ENCODE measurements at regions of chr2 and their contacts with region 1.

Region 1: DNA sequence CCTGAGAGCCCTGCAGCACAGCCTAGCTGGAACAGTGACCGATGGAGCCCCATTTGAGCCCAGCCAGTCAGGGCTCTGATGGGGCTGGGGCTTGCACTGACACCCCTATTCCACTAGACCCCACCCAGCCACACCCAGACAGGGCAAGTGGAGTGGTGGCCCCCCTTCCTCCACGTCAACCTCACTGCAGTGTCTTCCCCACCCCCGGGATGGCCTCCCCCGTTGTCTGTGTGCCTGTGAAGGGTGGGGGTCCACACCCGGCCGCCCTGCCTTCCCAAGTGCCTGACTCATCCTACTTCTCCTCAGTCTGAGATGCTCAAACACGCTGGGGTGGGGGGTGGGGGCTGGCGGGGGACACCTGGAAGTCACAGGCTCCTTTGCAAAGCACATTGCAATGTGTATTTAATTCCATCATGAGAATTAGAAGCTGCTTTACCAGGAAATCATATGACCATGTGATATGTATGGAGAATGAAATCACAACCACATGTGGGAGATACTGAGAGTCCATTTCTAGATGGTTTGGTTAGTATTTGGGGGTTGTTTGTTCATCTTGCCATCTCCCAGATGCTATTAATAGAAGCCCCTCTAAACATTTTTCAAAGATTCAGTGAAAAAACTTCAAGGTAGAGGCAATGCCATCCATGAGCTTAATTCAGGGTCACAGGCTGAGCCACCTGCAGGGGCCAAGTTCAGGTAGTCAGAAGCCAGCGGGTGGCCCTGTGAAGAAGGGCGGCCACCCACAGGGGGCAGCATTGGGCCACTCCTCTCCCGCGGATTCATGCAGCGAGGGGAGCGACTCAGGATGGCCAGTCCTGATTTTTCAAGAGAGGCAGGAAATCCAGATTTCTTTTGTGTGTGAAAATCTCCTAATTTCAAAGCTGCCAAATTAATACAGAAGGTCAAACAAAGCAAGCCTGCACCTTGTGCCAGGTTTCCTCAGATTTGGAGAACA is 22.7 kb upstream of the GMPPA start:
- DNase-seq: peak; percentile 52 to 86 (median 75)
- H3K4me3 ChIP-seq: no peak overlapping the region
- H3K27ac ChIP-seq: no peak overlapping the region
- H3K4me1 ChIP-seq: no peaks in the 10 kb centered on the region
- H3K27me3 ChIP-seq: no peaks in the 10 kb centered on the region
- CTCF ChIP-seq: peak; percentile 71 to 87 (median 80)
- POLR2A ChIP-seq: no peak

Region 2: GRCh38 chr2:219402665-219403515 is 73.1 kb before region 1 on chr2:
- intact Hi-C with region 1: loop called (anchors 10 kb)
- DNase-seq: peak; percentile 49 to 87 (median 76)
- H3K4me3 ChIP-seq: no peak overlapping the region
- H3K27ac ChIP-seq: no peak overlapping the region
- H3K4me1 ChIP-seq: peaks cover 0 to 10% of the 10 kb centered on the region in 2 donors
- H3K27me3 ChIP-seq: no peaks in the 10 kb centered on the region
- CTCF ChIP-seq: peak; percentile 74 to 88 (median 84)
- POLR2A ChIP-seq: no peak

Region 3: GRCh38 chr2:219537657-219538488 is 61.9 kb after region 1 on chr2:
- intact Hi-C with region 1: loop called in 1 of 2 experiments (anchors 2 kb)
- DNase-seq: no peak
- H3K4me3 ChIP-seq: no peak overlapping the region
- H3K27ac ChIP-seq: no peak overlapping the region
- H3K4me1 ChIP-seq: peaks cover 8 to 16% of the 10 kb centered on the region in 2 donors
- H3K27me3 ChIP-seq: no peaks in the 10 kb centered on the region
- CTCF ChIP-seq: no peak
- POLR2A ChIP-seq: no peak

Region 4: GRCh38 chr2:219571311-219572236 is 95.6 kb after region 1 on chr2 and contains the start of gene OBSL1:
- intact Hi-C with region 1: no loop called
- DNase-seq: peak; percentile 90 to 96 (median 94)
- H3K4me3 ChIP-seq: peak within 1 kb of the TSS in 3 of 4 donors; percentile 54 to 90 (median 73)
- H3K27ac ChIP-seq: peak within 1 kb of the TSS; percentile 69 to 96 (median 92)
- H3K4me1 ChIP-seq: peaks cover 10 to 16% of the 10 kb centered on the region in 2 donors
- H3K27me3 ChIP-seq: no peaks in the 10 kb centered on the region
- CTCF ChIP-seq: peak in 3 of 6 experiments; percentile 4 to 27 (median 6)
- POLR2A ChIP-seq: peak in 1 of 2 donors; percentile 51
- total RNA-seq, gene OBSL1: 127 to 215 (median 174) TPM